Adrenal gland (tissue), 19 donors: ENCODE measurements at regions of chr14 and their contacts with region 1.

Region 1: GRCh38 chr14:92135267-92135666 is 13.5 kb downstream of the CPSF2 start:
- DNase-seq: no peak
- H3K4me3 ChIP-seq: no peak overlapping the region
- H3K27ac ChIP-seq: no peak overlapping the region
- H3K4me1 ChIP-seq: peaks cover 0 to 4% of the 10 kb centered on the region in 2 donors
- H3K27me3 ChIP-seq: no peaks in the 10 kb centered on the region
- CTCF ChIP-seq: peak; percentile 24 to 61 (median 39)
- POLR2A ChIP-seq: no peak

Region 2: GRCh38 chr14:92686900-92687444 is 551.7 kb after region 1 on chr14:
- intact Hi-C with region 1: loop called in 1 of 2 experiments (anchors 10 kb)
- DNase-seq: peak; percentile 64 to 90 (median 83)
- H3K4me3 ChIP-seq: peak overlapping the region in 1 of 4 donors; percentile 50
- H3K27ac ChIP-seq: no peak overlapping the region
- H3K4me1 ChIP-seq: peaks cover 6 to 9% of the 10 kb centered on the region in 2 donors
- H3K27me3 ChIP-seq: no peaks in the 10 kb centered on the region
- CTCF ChIP-seq: peak; percentile 79 to 100 (median 98)
- POLR2A ChIP-seq: peak in 1 of 2 donors; percentile 5